ENCODE measurements at regions of chr1 and their contacts with region 1.

Region 1: DNA sequence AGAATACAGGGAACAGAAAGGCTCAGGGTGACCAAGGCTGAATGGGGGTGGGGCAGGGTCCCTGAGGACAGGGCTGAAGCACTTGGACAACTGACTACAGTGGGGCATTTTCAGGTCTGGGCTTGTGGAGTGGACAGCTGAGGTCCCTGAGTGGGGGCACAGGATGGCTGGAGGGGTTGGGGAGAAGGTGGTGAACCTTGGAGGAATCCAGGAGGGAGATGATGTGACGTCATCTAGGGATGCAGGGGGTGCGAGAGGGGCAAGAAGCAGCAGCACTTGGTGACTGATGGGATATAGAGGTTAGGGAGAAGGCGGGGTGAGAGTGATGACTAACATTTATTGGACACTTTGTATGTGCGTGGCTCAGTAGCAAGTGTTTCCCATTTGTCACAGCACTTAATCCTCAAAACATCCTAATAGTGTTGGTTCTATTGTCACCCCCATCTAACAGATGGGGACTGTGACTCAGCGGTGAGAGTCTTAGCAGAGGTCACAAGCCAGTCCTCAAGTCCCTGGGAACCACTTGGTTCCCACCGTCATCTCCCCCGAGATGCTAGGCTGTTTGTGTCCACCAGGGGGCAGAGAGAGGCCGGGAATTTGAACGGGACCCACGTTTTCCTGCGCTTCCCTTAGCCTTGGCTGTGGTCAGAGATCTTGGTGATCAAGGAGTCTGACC is 27.9 kb upstream of the BMP8B start:
- DNase-seq: peak; percentile 86
- H3K4me3 ChIP-seq: peak overlapping the region in 2 of 8 donors; percentile 30 to 56
- H3K27ac ChIP-seq: peak overlapping the region in 3 of 8 donors; percentile 43 to 54 (median 43)
- H3K4me1 ChIP-seq: peaks cover 0 to 17% (median 7%) of the 10 kb centered on the region in 6 donors
- H3K27me3 ChIP-seq: peaks cover 0 to 22% (median 0%) of the 10 kb centered on the region in 7 donors
- CTCF ChIP-seq: peak; percentile 72 to 97 (median 90)
- POLR2A ChIP-seq: no peak

Region 2: DNA sequence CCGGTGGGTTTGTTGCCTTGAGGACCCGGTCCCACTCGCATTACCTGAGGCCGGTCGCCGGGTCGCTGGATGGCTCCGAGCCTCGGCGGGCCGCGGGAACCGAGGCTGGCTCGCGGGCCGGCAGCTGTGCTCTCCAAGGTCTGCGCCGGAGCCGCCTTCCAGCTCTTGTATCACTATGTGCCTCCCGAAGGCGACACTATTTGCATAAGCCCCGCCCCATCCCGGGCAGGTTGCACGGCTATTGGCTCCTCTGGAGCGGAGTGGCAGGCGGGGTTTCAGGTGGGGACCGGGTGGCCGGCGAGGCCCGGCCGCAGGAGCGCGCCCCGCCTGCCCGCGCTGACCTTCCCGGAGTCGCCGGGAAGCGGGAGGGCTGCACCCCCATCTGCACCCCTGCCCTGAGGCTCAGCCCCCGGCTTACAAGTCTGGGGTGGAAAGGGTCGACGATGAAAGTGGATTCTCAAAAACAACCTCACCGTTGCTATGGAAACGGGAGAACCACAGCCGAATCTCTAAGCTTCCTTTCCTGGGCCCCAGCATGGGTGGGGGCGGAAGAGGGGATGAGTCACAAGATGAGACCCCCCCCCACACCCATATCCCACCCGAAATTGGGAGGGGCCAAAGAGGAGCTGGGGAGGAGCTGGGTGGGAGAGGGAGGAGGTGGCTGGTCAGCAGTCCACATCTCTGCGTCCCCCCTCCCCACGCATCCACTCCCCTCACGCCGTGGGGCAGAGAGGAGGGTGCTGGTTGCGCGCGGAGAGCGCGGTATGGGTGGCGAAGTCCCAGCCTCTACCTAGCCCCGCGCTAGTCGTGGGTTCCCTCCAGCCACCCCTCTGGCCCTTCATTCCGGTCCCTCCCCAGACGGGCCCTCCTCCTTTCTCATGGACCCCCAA is 125.0 kb before region 1 on chr1 and contains the start of gene HPCAL4:
- intact Hi-C with region 1: no loop called
- DNase-seq: peak; percentile 94
- H3K4me3 ChIP-seq: peak within 1 kb of the TSS; percentile 5 to 77 (median 39)
- H3K27ac ChIP-seq: peak within 1 kb of the TSS in 1 of 8 donors; percentile 21
- H3K4me1 ChIP-seq: peaks cover 16 to 25% (median 21%) of the 10 kb centered on the region in 6 donors
- H3K27me3 ChIP-seq: peaks cover 0 to 94% (median 50%) of the 10 kb centered on the region in 7 donors
- CTCF ChIP-seq: no peak
- POLR2A ChIP-seq: no peak
- total RNA-seq, gene HPCAL4: 0.26 to 0.70 (median 0.60) TPM

Region 3: DNA sequence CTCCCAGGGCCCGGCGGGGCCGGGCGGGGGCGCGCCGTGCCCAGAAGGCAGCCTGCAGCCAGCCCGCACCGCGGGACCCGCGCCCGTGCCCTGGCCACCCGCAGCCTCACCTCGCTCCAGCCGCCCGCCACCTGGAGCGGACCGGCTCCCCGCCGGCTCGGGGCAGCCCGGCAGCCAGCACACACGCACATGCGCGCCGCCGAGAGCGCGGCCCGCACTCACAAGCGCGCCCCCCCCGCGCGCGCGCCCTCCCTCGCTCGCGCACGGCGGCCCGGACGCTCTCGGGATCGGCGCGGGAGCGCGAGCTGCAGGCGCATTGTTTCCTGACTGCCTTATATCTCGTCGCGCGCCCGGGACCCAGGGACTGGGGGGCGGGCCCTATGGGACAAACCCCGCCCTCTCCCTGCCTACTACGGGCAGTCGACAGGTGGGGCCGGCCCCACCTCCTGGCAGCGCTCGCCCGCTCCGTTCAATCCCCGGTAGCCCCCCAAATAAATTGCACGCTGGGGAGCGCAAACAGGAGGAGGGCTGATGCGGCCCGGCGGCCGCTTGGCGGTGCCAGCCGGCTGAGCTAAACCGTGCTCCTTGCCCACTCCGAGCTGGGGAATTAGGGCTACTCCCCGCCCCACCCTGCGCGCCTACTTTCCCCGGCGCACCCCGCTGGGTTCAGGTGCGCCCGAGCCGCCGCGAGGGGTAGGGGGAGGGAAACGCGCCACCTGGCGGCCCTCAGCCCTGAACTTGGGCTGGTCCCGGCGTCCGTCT is 85.3 kb after region 1 on chr1 and contains the start of gene MYCL:
- intact Hi-C with region 1: loop called (anchors 2 kb)
- DNase-seq: peak; percentile 92
- H3K4me3 ChIP-seq: peak within 1 kb of the TSS; percentile 60 to 88 (median 64)
- H3K27ac ChIP-seq: peak within 1 kb of the TSS in 3 of 8 donors; percentile 40 to 58 (median 49)
- H3K4me1 ChIP-seq: peaks cover 5 to 26% (median 21%) of the 10 kb centered on the region in 6 donors
- H3K27me3 ChIP-seq: peaks cover 4 to 92% (median 42%) of the 10 kb centered on the region in 7 donors
- CTCF ChIP-seq: peak; percentile 45 to 84 (median 77)
- POLR2A ChIP-seq: no peak
- total RNA-seq, gene MYCL: 1.0 to 7.3 (median 5.5) TPM

Region 4: DNA sequence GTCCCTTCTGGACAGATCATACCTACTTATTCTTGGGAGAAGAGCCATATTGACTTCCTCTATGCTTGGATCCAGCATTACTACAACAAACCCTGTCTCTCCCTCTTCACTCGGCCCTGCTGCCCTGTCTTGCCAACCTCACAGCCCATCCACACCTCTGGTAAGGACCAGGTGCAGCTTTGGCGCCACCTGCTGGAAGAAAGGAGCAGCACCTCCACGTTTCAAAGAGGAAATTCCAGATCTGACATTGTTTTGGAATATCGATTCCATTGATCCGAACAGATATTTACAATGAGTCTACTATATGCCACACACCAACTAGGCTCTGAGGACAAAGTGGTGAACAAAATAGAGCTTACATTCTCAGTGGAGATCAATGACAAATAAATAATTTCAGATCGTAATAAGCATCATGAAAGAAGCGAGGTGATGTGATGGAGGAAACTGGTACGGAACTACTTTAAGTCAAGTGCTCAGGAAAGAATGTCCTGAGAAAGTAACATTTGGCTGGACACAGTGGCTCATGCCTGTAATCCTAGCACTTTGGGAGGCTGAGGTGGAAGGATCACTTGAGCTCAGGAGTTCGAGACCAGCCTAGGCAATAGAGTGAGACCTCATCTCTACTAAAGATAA is 157.1 kb after region 1 on chr1:
- intact Hi-C with region 1: loop called (anchors 2 kb)
- DNase-seq: peak; percentile 93
- H3K4me3 ChIP-seq: no peak overlapping the region
- H3K27ac ChIP-seq: no peak overlapping the region
- H3K4me1 ChIP-seq: peaks cover 0 to 16% (median 7%) of the 10 kb centered on the region in 6 donors
- H3K27me3 ChIP-seq: no peaks in the 10 kb centered on the region
- CTCF ChIP-seq: peak; percentile 78 to 97 (median 92)
- POLR2A ChIP-seq: no peak

Region 5: GRCh38 chr1:40032240-40032891 is 215.8 kb after region 1 on chr1:
- intact Hi-C with region 1: no loop called
- DNase-seq: no peak
- H3K4me3 ChIP-seq: no peak overlapping the region
- H3K27ac ChIP-seq: no peak overlapping the region
- H3K4me1 ChIP-seq: peaks cover 0 to 70% (median 43%) of the 10 kb centered on the region in 6 donors
- H3K27me3 ChIP-seq: no peaks in the 10 kb centered on the region
- CTCF ChIP-seq: peak; percentile 53 to 80 (median 67)
- POLR2A ChIP-seq: no peak

Measured in spleen (tissue), 13 donors.